ENCODE measurements at regions of chr16 and their contacts with region 1.

Region 1: DNA sequence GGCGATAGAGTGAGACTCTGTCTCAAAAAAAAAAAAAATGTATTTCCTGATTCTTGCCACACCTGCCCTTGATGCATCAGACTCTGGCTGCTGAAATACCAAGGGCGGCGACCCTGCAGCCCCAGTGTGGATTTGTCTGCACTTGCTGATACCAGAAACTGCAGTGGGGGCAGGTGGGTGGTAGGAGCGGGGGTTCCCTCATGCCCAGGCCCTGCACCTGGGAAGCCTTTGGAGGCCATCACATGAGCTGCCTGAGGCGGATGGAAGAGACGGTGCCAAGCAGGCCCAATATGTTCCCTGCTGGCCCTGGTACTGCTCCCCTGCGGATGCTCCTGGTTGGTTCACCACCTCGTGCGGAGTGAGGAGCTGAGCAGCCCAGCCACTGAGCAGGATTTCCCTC is 50.6 kb downstream of the MARF1 start:
- DNase-seq: peak; percentile 35
- H3K4me3 Mint-ChIP-seq: no peak overlapping the region
- H3K27ac Mint-ChIP-seq: no peak overlapping the region
- H3K4me1 Mint-ChIP-seq: peaks cover 39% of the 10 kb centered on the region
- H3K27me3 Mint-ChIP-seq: no peaks in the 10 kb centered on the region

Region 2: GRCh38 chr16:15487336-15488284 is 104.7 kb before region 1 on chr16:
- CTCF ChIA-PET with region 1: no interaction called
- POLR2A ChIA-PET with region 1: no interaction called
- intact Hi-C with region 1: loop called (anchors 2 kb)
- DNase-seq: no peak
- H3K4me3 Mint-ChIP-seq: no peak overlapping the region
- H3K27ac Mint-ChIP-seq: no peak overlapping the region
- H3K4me1 Mint-ChIP-seq: peaks cover 32% of the 10 kb centered on the region
- H3K27me3 Mint-ChIP-seq: no peaks in the 10 kb centered on the region

Region 3: DNA sequence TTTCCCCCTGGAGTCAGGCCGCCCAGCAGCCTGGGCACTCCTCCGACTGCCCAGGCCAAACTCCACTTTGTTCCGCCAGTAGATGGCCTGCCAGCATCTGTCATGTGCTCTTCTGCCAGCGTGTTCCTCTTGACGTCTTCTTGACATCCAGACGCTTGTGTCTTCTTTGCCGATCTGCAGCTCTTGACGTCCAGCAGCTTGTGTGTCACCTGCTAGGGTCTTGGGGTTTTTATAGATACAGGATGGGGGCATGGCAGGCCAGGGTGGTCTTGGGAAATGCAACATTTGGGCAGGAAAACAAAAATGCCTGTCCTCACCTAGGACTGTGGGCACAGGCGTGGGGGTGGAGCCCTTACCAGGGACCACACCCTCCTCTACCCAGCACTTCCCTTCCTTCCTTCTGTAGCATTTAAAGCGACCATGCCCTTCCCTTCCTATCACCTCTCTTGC is 69.2 kb before region 1 on chr16:
- CTCF ChIA-PET with region 1: no interaction called
- POLR2A ChIA-PET with region 1: no interaction called
- intact Hi-C with region 1: no loop called
- DNase-seq: no peak
- H3K4me3 Mint-ChIP-seq: no peak overlapping the region
- H3K27ac Mint-ChIP-seq: no peak overlapping the region
- H3K4me1 Mint-ChIP-seq: peaks cover 9% of the 10 kb centered on the region
- H3K27me3 Mint-ChIP-seq: no peaks in the 10 kb centered on the region

Region 4: GRCh38 chr16:15572329-15573001 is 19.9 kb before region 1 on chr16:
- CTCF ChIA-PET with region 1: interaction called, 4 read pairs
- POLR2A ChIA-PET with region 1: interaction called, 7 read pairs
- intact Hi-C with region 1: loop called (anchors 1 kb)
- DNase-seq: peak; percentile 41
- H3K4me3 Mint-ChIP-seq: no peak overlapping the region
- H3K27ac Mint-ChIP-seq: peak overlapping the region; percentile 32
- H3K4me1 Mint-ChIP-seq: peaks cover 24% of the 10 kb centered on the region
- H3K27me3 Mint-ChIP-seq: no peaks in the 10 kb centered on the region

Region 5: DNA sequence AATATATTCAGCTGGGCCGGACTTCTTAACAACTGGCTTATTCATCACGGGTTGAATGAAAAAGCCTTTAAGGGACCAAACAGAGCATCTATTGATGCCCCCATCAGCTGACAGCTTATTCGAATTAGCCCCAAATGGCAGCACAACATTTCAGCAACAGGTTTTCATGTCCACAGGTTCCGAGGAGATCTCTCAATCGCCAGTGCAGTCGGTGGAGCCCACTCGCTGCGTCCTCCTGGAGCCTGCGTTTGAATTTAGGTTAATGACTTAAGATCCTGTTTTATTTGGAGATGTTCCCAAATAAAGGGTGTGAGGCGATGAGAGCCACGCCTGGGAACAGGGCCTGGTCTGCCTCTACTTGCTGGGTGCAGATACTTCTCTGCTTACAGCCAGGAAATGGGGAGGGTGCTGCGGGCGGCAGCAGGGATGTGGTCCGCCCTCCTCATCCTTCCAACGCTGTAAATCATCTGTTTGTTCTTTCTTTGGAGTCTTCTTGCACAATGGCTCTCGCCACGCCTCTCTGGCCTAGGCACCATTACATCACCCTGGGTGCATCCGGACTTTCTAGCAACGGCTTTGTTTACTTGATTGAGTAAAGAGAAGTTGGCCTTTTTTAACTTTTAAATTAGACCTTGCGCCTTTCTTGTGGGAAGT is 80.3 kb after region 1 on chr16:
- CTCF ChIA-PET with region 1: no interaction called
- POLR2A ChIA-PET with region 1: no interaction called
- intact Hi-C with region 1: loop called (anchors 2 kb)
- DNase-seq: peak; percentile 87
- H3K4me3 Mint-ChIP-seq: peak overlapping the region; percentile 52
- H3K27ac Mint-ChIP-seq: peak overlapping the region; percentile 93
- H3K4me1 Mint-ChIP-seq: peaks cover 43% of the 10 kb centered on the region
- H3K27me3 Mint-ChIP-seq: no peaks in the 10 kb centered on the region

Region 6: DNA sequence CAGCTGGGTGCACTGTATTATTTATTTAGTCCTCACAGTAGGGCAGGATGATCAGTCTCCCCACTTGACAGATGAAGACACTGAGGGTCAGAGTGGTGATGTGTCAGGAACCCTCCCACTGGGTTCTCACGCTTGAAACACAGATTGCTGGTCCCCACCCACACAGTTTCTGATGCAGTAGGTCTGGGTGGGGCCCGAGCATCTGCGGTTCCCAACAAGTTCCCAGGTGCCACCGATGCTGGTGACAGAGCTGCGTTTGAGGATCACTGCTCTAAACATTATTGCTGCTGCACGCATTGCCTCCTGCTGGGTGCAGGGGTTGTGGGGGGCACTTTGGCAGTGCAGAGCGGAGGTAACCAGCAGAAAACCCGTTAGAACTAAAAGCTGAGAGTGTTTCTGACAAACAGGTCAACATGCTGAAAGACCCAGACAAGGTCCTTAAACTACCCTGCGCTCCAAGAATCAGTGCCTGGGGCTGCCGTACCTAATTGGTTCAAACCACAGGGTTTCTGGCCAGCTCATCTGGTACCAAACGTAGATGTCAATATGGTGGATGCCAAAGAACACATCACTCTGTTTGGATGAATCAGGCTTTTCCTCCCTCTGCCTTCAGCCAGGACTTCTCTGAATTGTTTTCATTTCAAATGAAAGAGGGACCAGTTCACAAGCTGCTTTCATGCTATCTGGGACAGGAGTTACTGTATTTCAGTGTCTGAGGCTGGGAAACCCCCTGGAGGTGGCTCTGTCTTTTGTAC is 433.1 kb after region 1 on chr16:
- CTCF ChIA-PET with region 1: no interaction called
- POLR2A ChIA-PET with region 1: no interaction called
- intact Hi-C with region 1: loop called (anchors 2 kb)
- DNase-seq: peak; percentile 86
- H3K4me3 Mint-ChIP-seq: peak overlapping the region; percentile 52
- H3K27ac Mint-ChIP-seq: peak overlapping the region; percentile 97
- H3K4me1 Mint-ChIP-seq: peaks cover 37% of the 10 kb centered on the region
- H3K27me3 Mint-ChIP-seq: no peaks in the 10 kb centered on the region